ENCODE measurements at regions of chr20 and their contacts with region 1.

Region 1: GRCh38 chr20:43666376-43667328 is at the start of gene MYBL2:
- DNase-seq: peak; percentile 77
- H3K4me3 Mint-ChIP-seq: peak within 1 kb of the TSS; percentile 82
- H3K27ac Mint-ChIP-seq: peak within 1 kb of the TSS; percentile 38
- H3K4me1 Mint-ChIP-seq: peaks cover 5% of the 10 kb centered on the region
- H3K27me3 Mint-ChIP-seq: peaks cover 6% of the 10 kb centered on the region
- total RNA-seq, gene MYBL2: 80.3 to 81.3 TPM

Region 2: DNA sequence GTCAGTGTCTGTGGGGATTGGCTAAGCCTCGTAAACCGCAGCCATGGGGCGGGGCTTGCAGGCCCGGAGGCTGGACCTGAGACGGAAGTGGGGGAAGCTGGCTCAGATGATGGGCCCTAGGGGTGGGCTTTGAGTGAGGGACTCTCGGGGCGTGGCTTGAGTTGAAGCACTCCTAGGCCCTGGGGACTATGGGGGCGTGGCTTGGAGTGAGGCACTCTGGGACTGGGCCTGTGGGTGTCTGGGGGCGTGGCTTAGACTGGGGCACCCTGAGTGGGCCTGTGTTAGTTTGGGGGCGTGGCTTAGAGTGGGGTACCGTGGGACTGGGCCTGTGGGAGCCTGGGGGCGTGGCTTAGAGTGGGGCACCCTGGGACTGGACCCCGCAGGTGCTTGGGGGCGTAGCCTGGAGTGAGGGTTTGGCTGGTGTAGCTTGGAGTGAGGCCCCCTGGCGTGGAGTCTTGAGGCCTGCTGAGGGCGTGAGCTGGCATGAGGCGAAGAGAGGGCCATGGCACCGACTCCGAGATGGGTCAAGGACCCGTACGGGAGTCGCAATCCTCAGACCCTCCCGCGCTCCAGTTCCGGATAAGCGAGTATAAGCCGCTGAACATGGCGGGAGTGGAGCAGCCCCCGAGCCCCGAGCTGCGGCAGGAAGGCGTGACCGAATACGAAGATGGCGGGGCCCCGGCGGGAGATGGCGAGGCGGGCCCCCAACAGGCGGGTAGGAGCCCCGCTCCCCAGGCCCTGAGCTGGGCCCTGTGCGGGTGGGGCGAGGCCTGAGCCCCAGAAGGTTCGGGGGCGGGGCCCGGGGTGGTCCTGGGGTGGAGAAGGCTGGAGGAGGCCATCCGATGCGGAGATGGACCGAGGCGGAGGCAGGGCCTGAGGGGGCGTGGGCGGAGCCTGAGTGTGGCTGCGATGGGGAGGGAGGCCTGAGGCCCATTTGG is 152.3 kb before region 1 on chr20:
- CTCF ChIA-PET with region 1: no interaction called
- POLR2A ChIA-PET with region 1: no interaction called
- intact Hi-C with region 1: loop called (anchors 1 kb)
- DNase-seq: peak; percentile 96
- H3K4me3 Mint-ChIP-seq: peak overlapping the region; percentile 87
- H3K27ac Mint-ChIP-seq: peak overlapping the region; percentile 81
- H3K4me1 Mint-ChIP-seq: peaks cover 14% of the 10 kb centered on the region
- H3K27me3 Mint-ChIP-seq: peaks cover 3% of the 10 kb centered on the region

Region 3: GRCh38 chr20:43650997-43651525 is 15.6 kb before region 1 on chr20:
- CTCF ChIA-PET with region 1: no interaction called
- POLR2A ChIA-PET with region 1: no interaction called
- intact Hi-C with region 1: no loop called
- DNase-seq: no peak
- H3K4me3 Mint-ChIP-seq: no peak overlapping the region
- H3K27ac Mint-ChIP-seq: no peak overlapping the region
- H3K4me1 Mint-ChIP-seq: peaks cover under 1% of the 10 kb centered on the region
- H3K27me3 Mint-ChIP-seq: no peaks in the 10 kb centered on the region

Region 4: DNA sequence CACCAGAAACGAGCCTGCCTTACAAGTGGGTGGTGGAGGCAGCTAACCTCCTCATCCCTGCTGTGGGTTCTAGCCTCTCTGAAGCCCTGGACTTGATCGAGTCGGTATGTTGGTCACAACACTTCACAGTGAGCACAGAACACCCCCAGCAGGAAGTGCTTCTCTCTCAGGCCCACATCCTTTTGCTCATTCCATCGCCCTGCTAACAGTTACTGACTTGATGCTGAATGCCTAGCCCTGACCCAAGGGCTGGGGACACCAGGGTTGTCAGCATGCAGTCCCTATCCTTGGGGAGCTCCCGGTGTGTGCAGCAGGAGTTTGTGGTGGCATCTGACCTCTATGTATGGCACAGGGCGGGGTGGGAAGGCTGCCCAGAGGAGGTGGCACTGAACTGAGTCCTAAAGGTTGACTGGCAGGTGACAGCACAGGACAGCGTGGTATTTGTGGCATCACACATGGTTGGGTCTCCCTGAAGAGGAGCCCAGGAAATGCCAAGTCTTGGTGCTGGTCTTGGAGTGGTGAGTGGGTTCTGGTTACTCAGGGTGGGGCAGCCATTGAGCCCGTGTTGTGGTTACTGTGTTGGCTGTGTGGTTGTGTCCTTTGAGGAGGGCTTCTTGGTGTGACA is 33.4 kb after region 1 on chr20:
- CTCF ChIA-PET with region 1: no interaction called
- POLR2A ChIA-PET with region 1: no interaction called
- intact Hi-C with region 1: no loop called
- DNase-seq: no peak
- H3K4me3 Mint-ChIP-seq: no peak overlapping the region
- H3K27ac Mint-ChIP-seq: no peak overlapping the region
- H3K4me1 Mint-ChIP-seq: no peaks in the 10 kb centered on the region
- H3K27me3 Mint-ChIP-seq: no peaks in the 10 kb centered on the region